Natural killer cell (primary cell): ENCODE measurements at regions of chr20 and their contacts with region 1.

Region 1: DNA sequence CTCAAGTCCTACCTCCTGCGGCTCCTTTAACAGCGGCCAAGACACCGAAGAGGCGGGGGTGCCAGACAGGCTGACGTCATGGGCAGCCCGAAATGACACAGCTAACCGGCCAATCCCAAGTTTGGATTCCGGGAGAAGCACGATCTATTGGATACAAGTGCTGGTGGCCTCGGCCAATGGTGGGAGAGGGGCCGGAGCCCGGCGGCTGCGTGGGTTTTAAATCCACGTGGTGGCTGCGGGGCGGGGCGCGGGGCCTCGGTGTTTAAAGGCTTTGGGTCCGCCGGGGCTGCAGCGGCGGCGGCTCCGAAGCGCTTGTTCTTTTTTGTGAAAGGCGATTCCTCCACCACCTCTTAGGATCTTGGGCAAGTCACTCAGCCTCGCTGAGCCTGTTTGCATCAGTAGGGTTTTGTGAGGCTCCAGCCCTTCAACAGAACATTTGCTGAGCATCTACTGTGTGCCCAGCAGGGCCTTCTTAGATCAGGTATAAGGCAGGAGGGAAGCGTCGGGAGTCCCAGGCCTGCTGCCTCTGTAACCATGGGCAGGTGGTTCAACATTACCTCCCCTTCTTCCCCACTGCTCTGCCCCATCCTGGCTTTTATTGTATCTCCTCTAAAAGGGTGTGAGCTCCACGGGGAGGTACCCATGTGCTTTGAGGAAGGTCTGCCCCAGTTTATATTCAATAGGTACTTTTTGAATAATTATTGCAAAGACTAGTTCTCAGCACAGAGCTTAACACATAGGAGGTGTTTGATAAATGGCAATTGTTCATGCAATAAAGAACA is 8.9 kb upstream of the PMEPA1 start:
- DNase-seq: peak; percentile 89 to 95
- ATAC-seq: peak; percentile 98 to 99 (median 99)
- H3K4me3 ChIP-seq: peak overlapping the region; percentile 5
- H3K4me3 Mint-ChIP-seq: peak overlapping the region; percentile 60
- H3K27ac ChIP-seq: peak overlapping the region; percentile 4
- H3K27ac Mint-ChIP-seq: peak overlapping the region; percentile 68 to 86
- H3K4me1 ChIP-seq: peaks cover 12% of the 10 kb centered on the region
- H3K4me1 Mint-ChIP-seq: peaks cover 5 to 8% of the 10 kb centered on the region in 2 donors
- H3K27me3 ChIP-seq: no peaks in the 10 kb centered on the region
- H3K27me3 Mint-ChIP-seq: peaks cover 16 to 36% of the 10 kb centered on the region in 2 donors
- CTCF ChIP-seq: no peak

Region 2: DNA sequence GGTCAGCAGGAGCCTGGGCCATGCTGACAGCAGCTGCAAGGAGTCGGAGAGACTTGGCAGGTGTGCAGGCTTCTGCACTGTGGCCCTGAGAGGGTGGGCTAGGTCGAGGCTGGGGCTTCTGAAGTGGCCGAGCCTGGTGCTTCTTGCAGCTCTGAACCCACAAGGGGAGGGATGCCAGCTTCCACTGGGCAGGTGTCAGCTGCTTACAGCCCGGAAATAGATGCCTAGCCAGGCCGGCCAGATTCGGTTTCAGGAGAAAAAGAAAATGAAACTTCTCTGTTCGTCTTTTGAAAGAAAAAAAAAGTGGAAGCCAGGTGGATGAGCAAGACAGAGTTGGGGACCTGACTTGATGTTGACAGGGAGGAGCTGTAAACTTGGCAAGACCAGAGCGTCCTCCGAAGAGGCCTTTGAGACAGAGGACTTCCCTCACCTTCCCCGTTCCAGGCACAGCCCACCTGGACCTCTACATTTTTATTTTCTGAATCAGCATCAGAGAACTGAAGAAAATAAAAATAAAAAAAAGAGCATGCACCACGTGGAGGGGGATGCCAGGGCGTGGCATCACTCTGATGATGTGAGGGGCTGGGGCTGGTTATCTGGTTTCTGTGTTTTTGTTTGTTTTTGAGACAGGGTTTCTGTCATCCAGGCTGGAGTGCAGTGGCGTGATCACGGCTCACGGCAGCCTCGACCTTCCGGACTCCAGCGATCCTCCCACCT is 98.2 kb before region 1 on chr20 and contains the start of gene ZBP1:
- intact Hi-C with region 1: loop called (anchors 2 kb)
- DNase-seq: peak; percentile 62 to 83
- ATAC-seq: peak; percentile 64 to 75 (median 64)
- H3K4me3 ChIP-seq: peak within 1 kb of the TSS; percentile 45
- H3K4me3 Mint-ChIP-seq: peak within 1 kb of the TSS; percentile 90
- H3K27ac ChIP-seq: peak within 1 kb of the TSS; percentile 95
- H3K27ac Mint-ChIP-seq: peak within 1 kb of the TSS; percentile 96 to 97
- H3K4me1 ChIP-seq: peaks cover 74% of the 10 kb centered on the region
- H3K4me1 Mint-ChIP-seq: peaks cover 54 to 55% of the 10 kb centered on the region in 2 donors
- H3K27me3 ChIP-seq: no peaks in the 10 kb centered on the region
- H3K27me3 Mint-ChIP-seq: no peaks in the 10 kb centered on the region
- CTCF ChIP-seq: no peak
- total RNA-seq, gene ZBP1: 95.4 to 99.7 (median 97.8) TPM

Region 3: DNA sequence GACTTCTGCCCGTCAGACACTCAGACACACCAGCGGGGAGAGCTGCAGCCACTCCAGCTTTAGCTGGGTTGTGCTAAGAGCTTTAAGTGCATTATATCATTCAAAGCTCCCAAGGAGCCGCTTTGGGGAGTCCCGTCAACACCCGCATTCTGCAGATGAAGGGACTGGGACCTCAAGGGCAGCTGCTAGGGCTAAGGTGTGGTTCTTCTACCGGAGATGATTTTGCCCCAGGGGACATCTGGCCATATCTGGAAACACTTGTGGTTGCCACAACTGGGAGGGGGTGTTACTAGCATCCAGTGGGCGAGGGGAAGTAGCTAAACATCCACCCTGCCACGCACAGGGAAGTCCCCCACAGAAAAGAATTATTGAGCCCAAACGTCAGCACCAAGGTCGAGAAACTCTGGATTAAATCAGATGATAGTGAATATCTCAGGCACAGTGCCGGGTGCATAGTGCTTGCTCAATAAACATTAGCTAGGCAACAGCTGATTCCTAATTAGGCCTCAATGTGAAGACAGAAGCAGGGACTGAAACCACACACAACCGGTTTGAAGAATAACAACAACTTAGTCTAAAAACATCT is 38.5 kb before region 1 on chr20:
- intact Hi-C with region 1: no loop called
- DNase-seq: peak; percentile 26 to 36
- ATAC-seq: peak; percentile 66 to 75 (median 71)
- H3K4me3 ChIP-seq: no peak overlapping the region
- H3K4me3 Mint-ChIP-seq: no peak overlapping the region
- H3K27ac ChIP-seq: peak overlapping the region; percentile 78
- H3K27ac Mint-ChIP-seq: peak overlapping the region in 1 of 2 donors; percentile 78
- H3K4me1 ChIP-seq: peaks cover 48% of the 10 kb centered on the region
- H3K4me1 Mint-ChIP-seq: peaks cover 19 to 36% of the 10 kb centered on the region in 2 donors
- H3K27me3 ChIP-seq: no peaks in the 10 kb centered on the region
- H3K27me3 Mint-ChIP-seq: peaks cover 26 to 46% of the 10 kb centered on the region in 2 donors
- CTCF ChIP-seq: no peak

Region 4: DNA sequence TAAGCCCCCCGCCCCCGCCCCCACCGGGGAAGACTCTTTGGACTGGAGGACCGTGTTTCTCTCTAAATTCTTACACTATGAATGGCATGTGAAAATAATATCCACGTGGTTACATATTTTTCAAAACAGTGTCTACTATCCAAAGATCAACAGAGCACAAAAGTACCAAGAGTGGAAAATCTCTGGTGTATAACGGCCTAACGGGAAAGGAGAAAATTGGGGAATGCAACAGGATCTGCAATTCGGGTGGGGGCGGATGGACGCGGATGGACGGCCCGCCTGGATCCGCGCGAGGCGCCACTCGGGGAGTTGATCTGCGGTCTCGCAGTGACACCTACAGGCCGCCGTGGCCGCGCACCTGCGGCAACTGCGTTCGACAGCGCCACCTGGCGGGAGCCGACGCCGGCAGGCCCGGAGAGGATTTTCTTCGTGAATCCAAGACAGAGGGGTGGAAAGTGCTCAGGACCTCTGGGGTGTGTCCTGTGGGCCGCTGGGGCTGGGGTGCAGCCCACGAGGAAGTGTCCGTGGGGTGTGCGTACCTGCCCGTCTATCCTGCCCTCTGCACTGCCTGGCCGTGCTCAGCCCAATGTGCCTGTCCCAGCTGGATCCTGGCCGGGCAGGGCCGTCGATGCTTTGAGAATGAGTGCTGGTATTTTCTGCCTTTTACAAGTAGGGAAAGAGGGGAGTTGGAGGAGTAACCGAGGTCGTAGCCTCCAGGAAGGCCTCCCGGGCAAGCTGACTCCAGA is 491.1 kb after region 1 on chr20:
- intact Hi-C with region 1: no loop called
- DNase-seq: peak; percentile 87 to 93
- ATAC-seq: peak; percentile 92 to 99 (median 98)
- H3K4me3 ChIP-seq: no peak overlapping the region
- H3K4me3 Mint-ChIP-seq: no peak overlapping the region
- H3K27ac ChIP-seq: no peak overlapping the region
- H3K27ac Mint-ChIP-seq: peak overlapping the region; percentile 5 to 75
- H3K4me1 ChIP-seq: peaks cover 6% of the 10 kb centered on the region
- H3K4me1 Mint-ChIP-seq: peaks cover 0 to 6% of the 10 kb centered on the region in 2 donors
- H3K27me3 ChIP-seq: no peaks in the 10 kb centered on the region
- H3K27me3 Mint-ChIP-seq: peaks cover 8 to 22% of the 10 kb centered on the region in 2 donors
- CTCF ChIP-seq: peak; percentile 100